ENCODE measurements at regions of chr17 and their contacts with region 1.

Region 1: GRCh38 chr17:64262417-64263260 is at the start of gene TEX2:
- DNase-seq: peak; percentile 57
- H3K4me3 Mint-ChIP-seq: peak within 1 kb of the TSS; percentile 94
- H3K27ac Mint-ChIP-seq: peak within 1 kb of the TSS; percentile 98
- H3K4me1 Mint-ChIP-seq: peaks cover 37% of the 10 kb centered on the region
- H3K27me3 Mint-ChIP-seq: peaks cover 21% of the 10 kb centered on the region
- total RNA-seq, gene TEX2: 20.6 and 21.9 TPM in 2 replicates

Region 2: DNA sequence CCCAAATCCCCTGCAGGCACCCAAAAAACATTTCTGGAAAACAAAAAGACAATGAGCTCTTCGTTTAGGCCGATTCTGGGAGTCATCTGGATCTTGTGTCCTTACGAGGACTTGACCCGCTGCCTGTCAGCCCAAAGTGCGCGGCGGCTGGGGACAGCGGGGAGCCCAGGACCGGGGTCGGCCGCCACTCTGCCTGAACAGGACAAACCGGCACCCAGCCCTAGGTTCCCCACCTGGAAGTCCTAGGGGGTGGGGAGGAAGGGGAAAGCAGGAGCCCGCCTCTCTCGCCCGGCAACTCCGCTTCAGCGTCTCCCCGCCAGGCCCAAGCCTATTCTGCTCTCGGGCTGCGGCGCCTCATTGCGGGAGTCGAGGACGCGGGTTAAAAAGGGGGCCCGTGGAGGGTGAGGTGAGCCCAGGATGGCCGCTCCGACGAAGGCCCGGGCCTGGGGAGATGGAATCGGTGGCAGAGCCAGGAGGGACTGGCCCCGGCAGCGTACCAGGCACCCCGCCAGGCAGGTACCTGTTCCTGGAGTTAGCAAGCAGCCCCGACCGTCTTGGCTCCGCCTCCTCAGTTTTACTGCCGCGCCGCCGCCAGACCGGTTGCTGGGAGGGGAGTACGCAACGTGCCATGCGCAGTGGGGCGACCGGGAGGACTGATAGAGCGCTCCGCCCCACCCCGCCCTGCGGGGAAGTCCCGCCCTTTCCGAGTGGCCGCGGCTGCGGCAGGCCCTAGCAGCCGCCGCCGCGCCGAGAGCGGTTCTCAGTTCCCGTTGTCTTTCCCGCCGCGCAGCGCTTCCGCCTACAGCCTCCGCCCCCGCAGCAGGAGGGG is 521.2 kb before region 1 on chr17 and contains the start of gene STRADA:
- intact Hi-C with region 1: loop called (anchors 5 kb)
- DNase-seq: peak; percentile 99
- H3K4me3 Mint-ChIP-seq: peak within 1 kb of the TSS; percentile 98
- H3K27ac Mint-ChIP-seq: peak within 1 kb of the TSS; percentile 97
- H3K4me1 Mint-ChIP-seq: peaks cover 25% of the 10 kb centered on the region
- H3K27me3 Mint-ChIP-seq: no peaks in the 10 kb centered on the region
- total RNA-seq, gene STRADA: 59.1 and 59.4 TPM in 2 replicates

Region 3: DNA sequence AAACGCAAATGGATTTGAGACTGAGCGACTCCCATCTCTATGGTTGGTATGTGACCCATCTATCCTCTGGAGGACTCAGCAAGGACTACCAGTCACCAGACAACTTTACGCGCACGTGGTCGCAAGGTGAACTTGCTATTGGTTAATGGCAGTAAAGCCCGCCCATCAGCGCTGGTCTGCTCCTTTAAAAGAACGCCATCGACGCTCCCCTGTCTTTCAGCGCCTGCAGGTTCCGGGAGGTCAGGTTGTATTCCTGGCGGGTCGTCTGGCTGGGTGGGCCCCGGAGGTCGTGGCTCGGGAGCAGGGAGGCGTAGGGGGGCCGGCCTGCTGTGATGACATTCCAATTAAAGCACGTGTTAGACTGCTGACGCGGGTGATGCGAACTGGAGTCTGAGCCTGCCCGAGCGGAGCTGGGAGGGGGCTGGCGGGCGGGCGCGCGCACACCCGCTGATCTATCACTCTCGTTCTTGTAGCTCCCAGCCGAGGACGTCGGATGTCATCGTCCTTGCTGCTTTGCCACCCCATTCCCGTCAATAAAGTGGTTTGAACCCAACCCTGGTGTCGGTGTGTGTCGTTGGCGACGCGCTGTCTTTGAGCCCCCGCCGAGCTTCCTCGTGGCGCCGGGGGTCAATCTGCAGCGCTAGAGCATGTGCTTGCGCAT is 116.8 kb before region 1 on chr17:
- intact Hi-C with region 1: loop called (anchors 1 kb)
- DNase-seq: peak; percentile 93
- H3K4me3 Mint-ChIP-seq: no peak overlapping the region
- H3K27ac Mint-ChIP-seq: no peak overlapping the region
- H3K4me1 Mint-ChIP-seq: peaks cover 19% of the 10 kb centered on the region
- H3K27me3 Mint-ChIP-seq: peaks cover 2% of the 10 kb centered on the region

Region 4: DNA sequence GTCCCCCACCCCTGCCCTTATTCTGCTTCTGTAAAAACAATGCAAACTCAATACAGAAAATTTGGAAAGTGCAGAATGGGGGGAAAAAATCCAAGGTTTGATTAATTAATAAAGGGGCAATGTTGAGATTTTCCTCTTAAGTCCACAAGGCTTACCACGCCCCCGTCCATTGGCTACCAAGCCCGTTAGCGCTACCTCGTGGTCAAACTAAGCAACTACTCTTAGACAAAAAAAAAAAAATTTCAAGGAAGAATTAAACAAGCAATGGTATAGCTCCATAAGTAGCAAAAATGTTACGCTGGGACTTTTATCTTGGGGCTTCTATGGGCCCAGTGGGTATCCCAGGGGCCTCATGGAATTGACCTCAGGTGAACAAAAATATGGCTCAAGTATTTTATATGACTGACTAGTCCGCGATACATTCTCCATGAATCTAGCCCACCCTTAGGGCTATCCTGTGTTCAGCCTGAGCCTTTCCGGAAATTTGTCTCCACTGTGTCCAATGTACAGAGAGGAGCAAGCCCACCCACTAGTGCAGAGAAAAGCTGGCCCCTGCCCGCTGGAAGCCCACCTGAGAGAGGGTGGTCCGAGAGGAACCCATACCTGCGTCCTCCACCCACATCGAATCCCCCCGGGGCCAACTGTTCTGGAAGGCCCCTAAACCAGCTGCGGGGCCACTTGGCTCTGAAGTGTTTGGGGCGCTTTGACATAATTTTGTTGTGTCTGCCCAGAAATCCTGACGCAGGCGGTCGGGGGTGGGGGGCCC is 19.5 kb after region 1 on chr17:
- intact Hi-C with region 1: loop called (anchors 1 kb)
- DNase-seq: peak; percentile 28
- H3K4me3 Mint-ChIP-seq: no peak overlapping the region
- H3K27ac Mint-ChIP-seq: no peak overlapping the region
- H3K4me1 Mint-ChIP-seq: peaks cover 7% of the 10 kb centered on the region
- H3K27me3 Mint-ChIP-seq: no peaks in the 10 kb centered on the region

Region 5: DNA sequence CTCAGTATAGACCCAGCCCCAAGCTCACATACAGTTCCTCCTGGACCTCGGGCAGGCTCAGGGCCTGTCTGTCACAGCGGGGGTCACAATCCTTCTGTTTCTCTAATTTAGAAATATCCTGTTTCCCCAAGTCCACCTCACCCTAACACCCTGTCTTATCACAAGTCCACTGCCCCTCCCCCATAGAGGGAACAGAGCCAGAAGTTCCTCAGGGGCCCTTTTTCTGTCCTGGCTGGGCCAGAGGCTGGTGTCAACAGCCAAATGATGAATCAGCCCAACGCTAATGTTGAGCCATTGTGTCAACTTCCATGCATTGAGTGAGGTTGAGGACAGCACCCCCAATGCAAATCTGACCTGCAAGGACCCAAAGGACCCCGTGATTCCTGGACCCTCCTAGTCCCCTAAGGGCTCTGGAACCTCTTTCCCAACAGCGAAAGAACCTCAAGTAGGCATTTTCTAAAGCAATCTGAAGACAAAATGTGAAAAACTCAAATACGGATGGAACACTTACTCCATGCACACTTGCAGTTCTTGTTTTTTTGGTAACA is 69.4 kb after region 1 on chr17:
- intact Hi-C with region 1: no loop called
- DNase-seq: no peak
- H3K4me3 Mint-ChIP-seq: no peak overlapping the region
- H3K27ac Mint-ChIP-seq: no peak overlapping the region
- H3K4me1 Mint-ChIP-seq: no peaks in the 10 kb centered on the region
- H3K27me3 Mint-ChIP-seq: peaks cover 4% of the 10 kb centered on the region

Region 6: DNA sequence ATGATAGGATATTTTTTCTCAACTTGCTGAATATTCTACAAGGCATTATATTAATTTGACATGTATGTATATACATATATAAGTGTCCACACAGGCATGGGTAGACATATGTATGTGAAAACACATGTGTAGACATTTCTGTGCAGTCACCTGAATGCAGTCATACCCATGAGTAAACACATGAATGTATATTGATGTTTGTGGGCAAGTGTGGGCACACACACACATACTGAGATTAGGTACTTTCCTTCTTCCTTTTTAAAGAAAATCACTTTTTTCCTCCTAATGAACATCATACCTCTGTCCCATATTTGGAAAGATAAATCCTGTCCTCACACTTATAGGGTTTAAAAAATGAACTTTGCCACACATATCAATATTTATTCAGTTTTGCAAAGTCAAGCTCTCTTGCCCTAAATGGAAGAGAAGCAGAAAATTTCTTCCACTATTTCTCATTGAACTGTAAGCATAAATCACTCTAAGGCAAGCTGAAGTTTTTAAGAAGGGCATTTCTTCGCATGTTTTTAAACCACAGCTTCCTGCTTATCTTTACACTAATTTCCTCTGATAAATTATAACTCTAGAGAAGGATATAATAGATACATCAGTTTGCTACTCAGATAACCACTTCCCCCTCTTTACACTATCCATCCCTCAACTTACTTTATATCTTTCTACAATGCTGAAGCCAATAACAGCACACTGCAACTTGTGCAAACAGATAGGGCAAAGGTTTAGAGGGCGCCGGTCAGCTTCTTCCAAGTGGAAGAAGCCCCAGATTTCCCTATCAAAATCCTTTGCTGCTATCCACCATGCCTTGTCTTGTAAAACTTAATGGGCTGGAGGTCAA is 706.2 kb after region 1 on chr17:
- intact Hi-C with region 1: loop called (anchors 5 kb)
- DNase-seq: no peak
- H3K4me3 Mint-ChIP-seq: peak overlapping the region; percentile 31
- H3K27ac Mint-ChIP-seq: peak overlapping the region; percentile 70
- H3K4me1 Mint-ChIP-seq: peaks cover 58% of the 10 kb centered on the region
- H3K27me3 Mint-ChIP-seq: peaks cover 1% of the 10 kb centered on the region